Adrenal gland (tissue), 19 donors: ENCODE measurements at regions of chr2 and their contacts with region 1.

Region 1: DNA sequence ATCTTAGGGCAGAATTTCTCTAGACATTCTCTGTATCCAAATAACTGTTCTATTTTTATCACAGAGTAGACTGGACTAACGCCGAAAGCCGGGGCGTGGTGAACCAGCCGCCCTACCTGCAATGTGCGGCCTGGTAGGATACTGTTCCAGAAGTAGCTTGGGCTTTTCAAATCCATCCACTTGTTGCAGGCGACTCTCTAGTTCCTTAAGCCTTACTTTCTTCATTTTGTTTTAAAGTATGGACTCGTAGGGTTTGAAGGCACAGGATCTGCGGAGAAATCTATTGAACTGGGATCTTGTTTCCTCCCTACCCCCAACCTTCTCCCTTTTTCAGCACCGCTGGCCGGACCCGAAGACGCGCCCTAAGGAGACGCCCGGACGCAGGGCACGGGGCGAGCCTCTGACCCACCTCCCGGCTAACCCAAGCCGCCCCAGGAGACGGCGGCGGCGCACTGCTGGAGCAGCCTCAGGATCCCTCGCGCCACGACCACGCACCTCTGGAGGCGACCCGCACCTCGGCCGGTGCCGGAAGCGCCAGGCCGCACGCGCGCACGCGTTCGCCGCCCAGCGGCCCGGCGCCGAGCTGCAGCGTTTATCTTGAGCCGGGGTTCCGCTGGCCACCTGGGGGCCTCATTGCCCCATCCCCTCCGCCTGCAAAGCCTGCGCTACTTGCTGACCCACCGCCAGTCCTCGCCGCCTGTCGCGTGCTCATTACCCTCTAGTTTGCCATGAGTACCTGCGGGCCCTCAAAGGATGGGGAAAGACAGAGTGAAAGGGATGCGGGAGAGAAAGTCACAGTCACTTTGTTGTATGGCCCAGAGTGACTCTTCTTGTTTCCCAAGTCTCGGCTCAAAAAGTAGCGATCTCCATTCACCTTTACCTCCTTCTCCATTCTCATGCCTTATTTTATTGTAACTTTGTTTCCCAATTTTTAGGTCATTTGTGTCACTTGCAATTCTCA is at the start of gene METTL5:
- DNase-seq: peak; percentile 78 to 88 (median 84)
- H3K4me3 ChIP-seq: peak within 1 kb of the TSS; percentile 6 to 74 (median 60)
- H3K27ac ChIP-seq: peak within 1 kb of the TSS in 4 of 5 donors; percentile 27 to 79 (median 51)
- H3K4me1 ChIP-seq: peaks cover 14 to 47% of the 10 kb centered on the region in 2 donors
- H3K27me3 ChIP-seq: no peaks in the 10 kb centered on the region
- CTCF ChIP-seq: peak; percentile 61 to 98 (median 86)
- POLR2A ChIP-seq: peak; percentile 50 to 66
- total RNA-seq, gene METTL5: 18.2 to 60.5 (median 43.9) TPM

Region 2: GRCh38 chr2:169887120-169887519 is 62.5 kb after region 1 on chr2:
- intact Hi-C with region 1: loop called in 1 of 2 experiments (anchors 10 kb)
- DNase-seq: no peak
- H3K4me3 ChIP-seq: no peak overlapping the region
- H3K27ac ChIP-seq: no peak overlapping the region
- H3K4me1 ChIP-seq: peaks cover 5 to 15% of the 10 kb centered on the region in 2 donors
- H3K27me3 ChIP-seq: no peaks in the 10 kb centered on the region
- CTCF ChIP-seq: no peak
- POLR2A ChIP-seq: no peak

Region 3: GRCh38 chr2:169928463-169928864 is 103.8 kb after region 1 on chr2:
- intact Hi-C with region 1: loop called (anchors 5 to 10 kb)
- DNase-seq: no peak
- H3K4me3 ChIP-seq: no peak overlapping the region
- H3K27ac ChIP-seq: no peak overlapping the region
- H3K4me1 ChIP-seq: peaks cover 3% of the 10 kb centered on the region in 2 donors
- H3K27me3 ChIP-seq: no peaks in the 10 kb centered on the region
- CTCF ChIP-seq: peak; percentile 59 to 86 (median 69)
- POLR2A ChIP-seq: no peak